HCT116 (cell line): ENCODE measurements at regions of chr1 and their contacts with region 1.

Region 1: DNA sequence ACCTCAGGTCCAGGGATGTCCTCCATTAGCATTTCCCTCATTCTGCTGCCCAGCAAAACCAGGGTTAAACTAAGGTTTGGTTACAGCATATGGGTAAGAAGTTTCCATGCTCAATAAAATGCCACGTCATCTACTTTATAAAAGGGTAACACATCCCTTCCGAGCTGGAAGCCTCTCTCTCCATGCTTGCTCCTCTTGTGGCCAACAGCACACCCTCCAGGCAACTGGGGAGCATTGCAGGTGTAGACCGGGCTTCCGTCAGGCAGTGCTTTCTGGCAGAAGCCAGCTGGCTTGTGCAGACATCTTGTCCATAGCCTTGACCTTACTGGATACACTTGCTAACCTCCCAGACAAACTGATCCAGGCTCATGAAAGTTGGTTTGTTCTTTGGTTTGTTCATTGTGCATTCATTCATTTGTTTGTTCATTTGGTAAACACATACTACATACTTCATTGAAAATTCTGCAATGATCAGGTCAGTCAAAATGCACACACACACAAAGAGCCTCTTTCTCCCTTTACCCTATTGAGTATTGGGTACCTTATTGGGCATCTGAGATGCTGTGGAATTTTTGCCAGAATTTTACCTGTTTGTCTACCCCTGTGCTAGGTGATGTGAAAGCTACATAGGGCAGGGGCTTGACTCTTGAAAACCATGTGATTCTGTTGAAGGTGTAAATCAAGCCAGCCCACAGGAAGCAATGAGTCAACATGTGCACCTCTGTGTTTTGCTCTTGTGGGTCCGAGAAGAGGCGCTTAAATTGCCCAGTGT is 422.8 kb downstream of the CAMTA1 start:
- DNase-seq: peak; percentile 65
- ATAC-seq: peak; percentile 100
- H3K4me3 ChIP-seq: no peak overlapping the region
- H3K27ac ChIP-seq: no peak overlapping the region
- H3K4me1 ChIP-seq: peaks cover 0 to 3% of the 10 kb centered on the region in 2 experiments; a peak in 1 of 4 replicates
- H3K27me3 ChIP-seq: no peaks in the 10 kb centered on the region
- CTCF ChIP-seq: peak; percentile 89 to 94 (median 92)
- POLR2A ChIP-seq: no peak
- RAD21 ChIP-seq: peak; percentile 93

Region 2: DNA sequence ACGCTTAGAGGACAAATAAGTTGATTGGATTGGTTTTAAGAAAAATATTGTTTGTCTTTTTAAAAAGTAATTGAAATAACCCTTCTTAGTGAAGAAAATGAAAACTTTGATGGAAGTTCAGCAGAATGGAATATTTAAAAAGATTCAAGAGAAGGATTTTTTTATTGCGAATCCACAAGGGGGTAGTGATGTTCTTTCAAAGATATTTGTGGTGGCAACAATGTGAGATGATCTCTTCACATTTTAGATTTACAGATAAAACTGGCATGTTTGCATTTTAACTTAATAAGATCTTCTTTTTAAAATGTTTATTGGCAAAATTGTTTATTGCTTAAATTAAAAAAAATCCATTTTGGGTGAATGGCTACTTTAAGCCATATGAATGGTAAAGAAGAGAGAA is 413.9 kb before region 1 on chr1:
- CTCF ChIA-PET with region 1: interaction called, 6 read pairs
- POLR2A ChIA-PET with region 1: no interaction called
- RAD21 ChIA-PET with region 1: interaction called in 1 of 2 experiments, 3 read pairs
- intact Hi-C with region 1: loop called (anchors 2 kb)
- DNase-seq: peak; percentile 26
- ATAC-seq: no peak
- H3K4me3 ChIP-seq: no peak overlapping the region
- H3K27ac ChIP-seq: no peak overlapping the region
- H3K4me1 ChIP-seq: no peaks in the 10 kb centered on the region
- H3K27me3 ChIP-seq: no peaks in the 10 kb centered on the region
- CTCF ChIP-seq: peak in 2 of 3 experiments; percentile 60 to 62; a peak in 3 of 6 replicates
- POLR2A ChIP-seq: no peak
- RAD21 ChIP-seq: peak; percentile 69; the same call in 1 of the 2 replicates

Region 3: GRCh38 chr1:6998267-6998666 is 209.8 kb before region 1 on chr1:
- CTCF ChIA-PET with region 1: no interaction called
- POLR2A ChIA-PET with region 1: no interaction called
- RAD21 ChIA-PET with region 1: no interaction called
- intact Hi-C with region 1: loop called (anchors 2 kb)
- DNase-seq: peak; percentile 86
- ATAC-seq: peak; percentile 100
- H3K4me3 ChIP-seq: no peak overlapping the region
- H3K27ac ChIP-seq: no peak overlapping the region
- H3K4me1 ChIP-seq: peaks cover 0 to 7% of the 10 kb centered on the region in 2 experiments; a peak in 3 of 4 replicates
- H3K27me3 ChIP-seq: peaks cover 5% of the 10 kb centered on the region; the same call in 1 of the 2 replicates
- CTCF ChIP-seq: peak; percentile 54 to 84 (median 64); a peak in 5 of 6 replicates
- POLR2A ChIP-seq: no peak
- RAD21 ChIP-seq: peak; percentile 67

Region 4: DNA sequence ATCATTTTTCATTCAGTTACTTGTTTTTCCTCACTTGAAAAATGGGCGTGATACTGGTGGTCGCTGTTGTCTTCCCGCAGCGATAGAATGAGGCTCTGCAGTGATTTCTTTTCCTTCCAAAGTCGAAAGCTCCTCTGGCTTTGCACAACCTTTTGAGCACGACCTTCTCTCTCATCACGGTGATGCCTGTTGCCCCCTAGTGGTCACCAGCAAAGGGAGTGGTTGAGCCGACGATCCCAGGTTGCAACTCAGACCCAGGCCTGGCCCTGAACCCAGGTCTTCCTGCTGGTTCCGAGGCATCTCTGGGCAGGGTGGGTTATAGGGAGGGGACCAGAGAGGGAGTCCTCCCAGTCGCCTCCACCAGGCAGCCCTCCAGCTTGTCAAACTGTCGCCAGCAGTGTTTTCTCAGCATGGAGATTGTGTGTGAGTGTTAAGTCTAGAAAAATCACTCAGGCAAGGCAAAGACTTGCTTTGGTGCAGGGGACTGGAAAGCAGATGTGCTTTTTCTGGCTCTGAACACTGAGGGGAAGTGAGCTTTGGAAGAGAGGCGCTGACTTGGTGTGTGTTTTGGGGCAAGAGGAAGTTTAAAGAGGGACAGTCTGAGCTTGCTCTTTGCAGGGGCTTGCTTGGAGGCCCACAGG is 137.6 kb before region 1 on chr1:
- CTCF ChIA-PET with region 1: interaction called, 10 read pairs
- POLR2A ChIA-PET with region 1: no interaction called
- RAD21 ChIA-PET with region 1: interaction called in 1 of 2 experiments, 3 read pairs
- intact Hi-C with region 1: no loop called
- DNase-seq: peak; percentile 18
- ATAC-seq: peak; percentile 93
- H3K4me3 ChIP-seq: no peak overlapping the region
- H3K27ac ChIP-seq: no peak overlapping the region
- H3K4me1 ChIP-seq: 0 out of 4 replicates have a peak, but pooled peaks cover 0 to 4% of the 10 kb centered on the region in 2 experiments
- H3K27me3 ChIP-seq: peaks cover 34% of the 10 kb centered on the region; the same call in 1 of the 2 replicates
- CTCF ChIP-seq: peak; percentile 70 to 93 (median 87)
- POLR2A ChIP-seq: no peak
- RAD21 ChIP-seq: peak; percentile 78